Activated CD4-positive, alpha-beta memory T cell treated with anti-CD3 and anti-CD28 coated beads for 36 hours (primary cell): ENCODE measurements at regions of chr4 and their contacts with region 1.

Region 1: DNA sequence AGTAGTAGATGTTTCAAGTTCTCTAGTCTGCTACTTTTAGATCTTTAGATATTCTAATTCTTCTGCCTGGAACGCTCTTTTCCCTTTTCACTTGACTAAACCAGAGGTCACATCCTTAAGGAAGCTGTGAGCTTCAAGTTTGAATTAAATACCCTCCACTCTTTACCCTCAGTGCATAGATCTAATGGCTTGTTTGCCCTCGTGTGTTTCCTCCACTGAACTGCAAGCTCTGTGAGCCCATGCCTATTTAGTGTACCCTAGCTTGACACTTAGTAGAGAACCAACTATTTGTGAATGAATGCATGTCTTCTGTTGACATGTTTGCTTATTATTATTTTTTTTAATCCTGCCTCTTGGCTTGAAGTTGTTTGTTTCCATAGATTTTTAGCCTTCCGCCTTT is 138.3 kb downstream of the PDE5A start:
- DNase-seq: no peak
- H3K4me3 Mint-ChIP-seq: no peak overlapping the region
- H3K27ac Mint-ChIP-seq: no peak overlapping the region
- H3K4me1 Mint-ChIP-seq: no peaks in the 10 kb centered on the region
- H3K27me3 Mint-ChIP-seq: no peaks in the 10 kb centered on the region

Region 2: GRCh38 chr4:118981839-118982381 is 508.4 kb before region 1 on chr4:
- CTCF ChIA-PET with region 1: interaction called, 4 read pairs
- POLR2A ChIA-PET with region 1: no interaction called
- intact Hi-C with region 1: loop called (anchors 5 kb)
- DNase-seq: peak; percentile 55
- H3K4me3 Mint-ChIP-seq: no peak overlapping the region
- H3K27ac Mint-ChIP-seq: no peak overlapping the region
- H3K4me1 Mint-ChIP-seq: peaks cover 1% of the 10 kb centered on the region
- H3K27me3 Mint-ChIP-seq: peaks cover 2% of the 10 kb centered on the region

Region 3: GRCh38 chr4:119785963-119786362 is 295.6 kb after region 1 on chr4:
- CTCF ChIA-PET with region 1: no interaction called
- POLR2A ChIA-PET with region 1: no interaction called
- intact Hi-C with region 1: no loop called
- DNase-seq: no peak
- H3K4me3 Mint-ChIP-seq: no peak overlapping the region
- H3K27ac Mint-ChIP-seq: no peak overlapping the region
- H3K4me1 Mint-ChIP-seq: no peaks in the 10 kb centered on the region
- H3K27me3 Mint-ChIP-seq: no peaks in the 10 kb centered on the region